ENCODE measurements at regions of chr20 and their contacts with region 1.

Region 1: GRCh38 chr20:47493175-47493962 is 8.3 kb upstream of the NCOA3 start:
- DNase-seq: peak; percentile 90
- H3K4me3 Mint-ChIP-seq: peak overlapping the region; percentile 44
- H3K27ac Mint-ChIP-seq: peak overlapping the region; percentile 21
- H3K4me1 Mint-ChIP-seq: peaks cover 13% of the 10 kb centered on the region
- H3K27me3 Mint-ChIP-seq: no peaks in the 10 kb centered on the region
- CTCF ChIP-seq: no peak

Region 2: GRCh38 chr20:47392015-47392720 is 101.2 kb before region 1 on chr20:
- CTCF ChIA-PET with region 1: no interaction called
- POLR2A ChIA-PET with region 1: interaction called, 31 read pairs
- intact Hi-C with region 1: no loop called
- DNase-seq: peak; percentile 97
- H3K4me3 Mint-ChIP-seq: peak overlapping the region; percentile 67
- H3K27ac Mint-ChIP-seq: peak overlapping the region; percentile 98
- H3K4me1 Mint-ChIP-seq: peaks cover 22% of the 10 kb centered on the region
- H3K27me3 Mint-ChIP-seq: no peaks in the 10 kb centered on the region
- CTCF ChIP-seq: no peak

Region 3: DNA sequence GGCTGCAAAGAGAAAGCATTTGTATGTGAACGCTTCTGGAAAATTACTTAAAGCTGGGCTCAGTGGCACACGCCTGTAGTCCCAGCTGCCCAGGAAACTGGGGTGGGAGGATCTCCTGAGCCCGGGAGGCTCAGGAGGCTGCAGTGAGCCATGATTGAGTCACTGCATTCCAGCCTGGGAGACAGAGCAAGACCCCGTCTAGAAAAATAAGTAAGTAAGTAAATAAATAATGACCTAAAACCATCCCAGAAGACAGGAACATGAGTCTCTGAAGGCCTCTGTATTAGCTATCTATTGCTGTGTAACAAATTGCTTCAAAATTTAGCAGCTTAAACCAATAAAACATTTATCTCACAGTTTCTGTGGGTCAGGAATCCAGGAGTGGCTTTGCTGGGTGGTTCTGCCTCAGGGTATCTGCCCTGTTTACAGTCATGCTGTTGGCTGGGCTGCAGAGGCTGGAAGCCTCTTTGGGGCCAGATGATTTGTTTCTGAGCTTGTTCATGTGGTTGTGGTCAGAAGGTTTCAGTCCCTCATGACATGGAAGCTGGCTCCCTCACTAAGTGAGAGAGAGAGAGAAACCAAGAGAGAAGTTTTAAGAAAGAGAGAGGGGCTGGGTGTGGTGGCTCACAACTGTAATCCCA is 40.1 kb before region 1 on chr20:
- CTCF ChIA-PET with region 1: interaction called, 7 read pairs
- POLR2A ChIA-PET with region 1: interaction called, 42 read pairs
- intact Hi-C with region 1: no loop called
- DNase-seq: peak; percentile 92
- H3K4me3 Mint-ChIP-seq: peak overlapping the region; percentile 45
- H3K27ac Mint-ChIP-seq: peak overlapping the region; percentile 91
- H3K4me1 Mint-ChIP-seq: peaks cover 27% of the 10 kb centered on the region
- H3K27me3 Mint-ChIP-seq: no peaks in the 10 kb centered on the region
- CTCF ChIP-seq: no peak

Region 4: DNA sequence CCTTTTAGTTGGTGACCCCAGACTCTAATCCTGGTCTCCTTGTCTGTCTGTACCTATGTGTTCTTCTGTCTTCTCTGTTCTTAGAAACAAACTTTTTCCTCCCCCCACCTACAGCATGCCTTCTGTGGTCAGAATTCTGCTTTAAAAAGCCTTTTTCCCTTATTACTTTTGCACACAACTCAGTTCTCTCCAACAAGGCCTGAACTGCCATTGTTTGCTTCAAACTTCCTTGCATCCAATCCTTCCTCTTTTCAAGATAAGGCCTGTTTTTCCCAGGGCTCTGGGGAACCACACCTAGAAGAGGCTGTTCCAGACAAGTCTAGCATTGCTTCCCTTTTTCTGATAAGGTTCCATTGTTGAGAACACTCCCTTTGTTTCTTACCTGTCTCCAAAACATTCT is 13.9 kb before region 1 on chr20:
- CTCF ChIA-PET with region 1: interaction called, 10 read pairs
- POLR2A ChIA-PET with region 1: interaction called, 21 read pairs
- intact Hi-C with region 1: no loop called
- DNase-seq: no peak
- H3K4me3 Mint-ChIP-seq: no peak overlapping the region
- H3K27ac Mint-ChIP-seq: no peak overlapping the region
- H3K4me1 Mint-ChIP-seq: peaks cover 10% of the 10 kb centered on the region
- H3K27me3 Mint-ChIP-seq: no peaks in the 10 kb centered on the region
- CTCF ChIP-seq: no peak

Measured in MCF 10A (cell line).